IMR-90 (cell line): ENCODE measurements at regions of chr5 and their contacts with region 1.

Region 1: GRCh38 chr5:88729084-88729828 is 153.7 kb downstream of the MEF2C start:
- DNase-seq: peak; percentile 78
- ATAC-seq: peak; percentile 91
- H3K4me3 ChIP-seq: no peak overlapping the region
- H3K27ac ChIP-seq: no peak overlapping the region
- H3K4me1 ChIP-seq: no peaks in the 10 kb centered on the region
- H3K27me3 ChIP-seq: no peaks in the 10 kb centered on the region
- CTCF ChIP-seq: peak; percentile 79
- POLR2A ChIP-seq: no peak
- RAD21 ChIP-seq: peak; percentile 90

Region 2: DNA sequence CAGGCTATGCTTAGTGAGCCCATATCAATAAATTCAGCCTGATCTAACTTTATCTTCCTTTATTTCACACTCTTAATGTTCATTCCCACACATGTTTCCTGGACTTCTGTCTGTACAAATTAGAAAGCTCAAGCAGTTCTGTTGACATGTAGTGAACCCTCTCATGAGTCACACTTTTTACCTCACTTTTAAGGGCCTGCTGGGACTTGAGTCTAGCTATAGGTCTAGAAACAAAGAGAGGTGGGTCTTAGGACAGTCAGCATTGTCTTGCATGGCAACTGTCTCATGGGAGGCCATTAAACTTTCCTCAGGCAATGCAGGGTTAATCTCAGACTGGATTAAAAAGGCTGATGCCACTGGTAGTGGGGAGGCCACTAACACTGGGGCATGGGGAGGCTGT is 1307.9 kb before region 1 on chr5:
- CTCF ChIA-PET with region 1: no interaction called
- POLR2A ChIA-PET with region 1: no interaction called
- dilution Hi-C with region 1: no loop called
- in situ Hi-C with region 1: no loop called
- intact Hi-C with region 1: loop called (anchors 10 kb)
- DNase-seq: no peak
- ATAC-seq: no peak
- H3K4me3 ChIP-seq: no peak overlapping the region
- H3K27ac ChIP-seq: no peak overlapping the region
- H3K4me1 ChIP-seq: no peaks in the 10 kb centered on the region
- H3K27me3 ChIP-seq: no peaks in the 10 kb centered on the region
- CTCF ChIP-seq: no peak
- POLR2A ChIP-seq: no peak
- RAD21 ChIP-seq: no peak

Region 3: GRCh38 chr5:88785391-88786219 is 56.3 kb after region 1 on chr5:
- CTCF ChIA-PET with region 1: no interaction called
- POLR2A ChIA-PET with region 1: no interaction called
- dilution Hi-C with region 1: no loop called
- in situ Hi-C with region 1: no loop called
- intact Hi-C with region 1: loop called (anchors 5 kb)
- DNase-seq: peak; percentile 93
- ATAC-seq: peak; percentile 94
- H3K4me3 ChIP-seq: peak overlapping the region; percentile 7; the same call in 1 of the 2 replicates
- H3K27ac ChIP-seq: no peak overlapping the region
- H3K4me1 ChIP-seq: peaks cover 6% of the 10 kb centered on the region; the same call in 1 of the 2 replicates
- H3K27me3 ChIP-seq: no peaks in the 10 kb centered on the region
- CTCF ChIP-seq: no peak
- POLR2A ChIP-seq: peak; percentile 46; the same call in 1 of the 2 replicates
- RAD21 ChIP-seq: no peak

Region 4: DNA sequence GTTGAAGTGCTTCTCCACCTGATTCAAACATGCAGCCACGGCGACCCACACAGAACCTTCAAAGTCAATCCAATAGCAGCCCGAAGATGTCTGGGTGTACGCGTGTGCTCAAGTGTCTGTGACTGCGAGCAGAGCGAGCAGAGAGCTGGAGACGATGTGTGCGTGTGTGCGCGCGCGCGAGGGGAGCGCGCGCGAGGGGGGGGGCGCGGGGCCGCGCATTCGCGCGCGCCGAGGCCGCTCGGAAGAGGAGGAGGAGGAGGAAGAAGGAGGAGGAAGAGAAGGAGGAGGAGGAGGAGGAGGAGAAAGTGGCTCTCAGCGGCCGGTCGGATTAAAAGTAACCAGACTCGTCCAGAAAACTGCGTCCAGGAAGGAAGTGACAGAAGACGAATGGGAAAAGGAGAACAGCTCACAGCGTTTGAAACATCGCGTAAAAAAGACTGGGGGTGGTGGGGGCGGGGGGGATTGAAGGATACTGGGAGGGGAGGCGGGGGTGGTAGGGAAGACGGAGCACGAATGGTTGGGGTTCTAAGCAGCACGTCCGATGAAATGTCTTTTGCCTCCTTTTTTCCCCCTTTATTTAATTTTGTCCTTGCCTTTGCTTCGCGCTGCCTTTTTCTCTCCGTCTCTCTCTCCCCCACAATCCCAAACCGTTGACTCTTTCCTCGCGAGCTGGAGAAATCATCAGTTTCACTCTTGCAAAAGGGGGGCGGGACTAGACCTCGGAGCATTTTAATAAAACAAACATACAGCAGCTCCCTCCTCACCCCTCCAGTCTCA is 154.0 kb after region 1 on chr5 and contains the start of gene MEF2C:
- CTCF ChIA-PET with region 1: interaction called, 3 read pairs
- POLR2A ChIA-PET with region 1: no interaction called
- dilution Hi-C with region 1: no loop called
- in situ Hi-C with region 1: no loop called
- intact Hi-C with region 1: loop called (anchors 2 kb)
- DNase-seq: peak; percentile 81
- ATAC-seq: peak; percentile 79
- H3K4me3 ChIP-seq: peak within 1 kb of the TSS; percentile 61
- H3K27ac ChIP-seq: peak within 1 kb of the TSS; percentile 79
- H3K4me1 ChIP-seq: 0 out of 2 replicates have a peak, but pooled peaks cover 3% of the 10 kb centered on the region
- H3K27me3 ChIP-seq: no peaks in the 10 kb centered on the region
- CTCF ChIP-seq: no peak
- POLR2A ChIP-seq: peak; percentile 70; the same call in 1 of the 2 replicates
- RAD21 ChIP-seq: peak; percentile 21
- total RNA-seq, gene MEF2C: 6.8 and 9.4 TPM in 2 replicates

Region 5: GRCh38 chr5:88940713-88941112 is 211.5 kb after region 1 on chr5:
- CTCF ChIA-PET with region 1: no interaction called
- POLR2A ChIA-PET with region 1: interaction called, 3 read pairs
- dilution Hi-C with region 1: no loop called
- in situ Hi-C with region 1: no loop called
- intact Hi-C with region 1: loop called (anchors 5 kb)
- DNase-seq: no peak
- ATAC-seq: no peak
- H3K4me3 ChIP-seq: no peak overlapping the region
- H3K27ac ChIP-seq: no peak overlapping the region
- H3K4me1 ChIP-seq: peaks cover 17% of the 10 kb centered on the region
- H3K27me3 ChIP-seq: no peaks in the 10 kb centered on the region
- CTCF ChIP-seq: no peak
- POLR2A ChIP-seq: no peak
- RAD21 ChIP-seq: no peak

Region 6: DNA sequence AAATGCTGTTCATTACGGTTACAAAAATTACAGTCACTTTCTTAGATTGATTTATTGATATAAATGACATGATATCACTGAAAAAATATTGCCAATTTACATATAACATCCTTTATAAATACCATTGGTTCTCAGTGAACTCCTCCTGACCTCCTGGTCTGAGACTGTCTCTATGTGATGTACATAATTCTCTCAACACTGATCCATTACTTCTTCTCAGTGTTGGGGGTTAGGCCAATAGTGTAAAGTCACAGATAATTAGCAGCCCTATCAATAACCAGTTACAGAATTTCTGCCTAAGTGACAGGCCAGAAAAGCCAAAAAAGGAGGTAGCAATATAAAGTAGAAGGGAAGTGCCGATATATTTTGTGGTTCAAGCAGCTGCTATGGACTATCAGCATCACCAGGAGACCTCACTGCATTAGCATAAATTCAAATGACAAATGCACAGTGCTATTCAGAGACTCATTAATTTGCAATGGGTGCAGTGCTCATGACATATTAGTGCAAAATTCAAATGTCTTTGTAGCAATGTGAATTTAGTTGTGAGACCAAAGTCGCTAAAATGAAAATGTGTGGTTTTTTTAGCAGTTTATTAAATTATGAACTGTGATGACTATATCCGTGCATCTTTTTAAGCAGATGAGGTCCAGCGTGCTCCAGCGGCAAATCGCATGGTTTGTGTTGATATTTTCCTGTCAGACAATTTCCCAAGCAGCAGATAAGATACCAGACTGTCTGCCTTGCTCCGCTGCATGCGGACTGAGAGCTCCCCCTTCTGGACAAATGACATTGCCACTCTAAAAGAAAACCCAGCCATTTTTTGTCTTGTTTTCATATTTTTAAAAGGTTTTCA is 1535.7 kb after region 1 on chr5:
- CTCF ChIA-PET with region 1: interaction called, 16 read pairs
- POLR2A ChIA-PET with region 1: no interaction called
- dilution Hi-C with region 1: no loop called
- in situ Hi-C with region 1: loop called (anchors 5 kb)
- intact Hi-C with region 1: loop called (anchors 1 kb)
- DNase-seq: peak; percentile 61
- ATAC-seq: peak; percentile 83
- H3K4me3 ChIP-seq: no peak overlapping the region
- H3K27ac ChIP-seq: no peak overlapping the region
- H3K4me1 ChIP-seq: no peaks in the 10 kb centered on the region
- H3K27me3 ChIP-seq: no peaks in the 10 kb centered on the region
- CTCF ChIP-seq: peak; percentile 98
- POLR2A ChIP-seq: 0 out of 2 replicates have a peak, but pooled peaks have one; percentile 29
- RAD21 ChIP-seq: peak; percentile 90

Region 7: DNA sequence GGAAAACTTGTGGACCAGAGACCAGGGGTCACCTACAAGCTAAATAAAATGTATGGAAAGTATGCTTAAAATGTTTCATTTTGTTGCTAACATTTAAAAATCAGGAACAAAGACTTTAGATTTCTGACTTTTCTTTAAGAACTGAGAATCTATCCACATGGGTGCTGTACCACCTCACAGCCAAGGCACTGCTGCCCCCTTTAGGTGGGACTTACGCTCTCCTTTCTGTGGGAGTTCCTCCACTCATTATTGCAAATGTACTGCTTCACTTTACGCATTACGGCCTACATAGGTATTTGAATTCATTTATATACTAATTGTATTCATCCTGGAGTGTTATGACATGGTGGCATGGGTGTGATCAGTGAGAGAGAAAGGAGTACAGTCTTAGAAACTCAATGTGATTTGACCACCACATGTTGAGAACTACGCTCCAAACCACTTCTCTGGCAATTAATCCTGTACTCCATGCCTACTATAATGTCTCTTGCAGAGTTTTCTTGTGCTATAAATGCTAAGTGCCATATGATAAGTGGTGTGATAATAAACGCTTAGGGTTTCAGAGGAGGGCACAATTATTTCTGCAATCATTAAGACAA is 1705.0 kb after region 1 on chr5:
- CTCF ChIA-PET with region 1: no interaction called
- POLR2A ChIA-PET with region 1: no interaction called
- dilution Hi-C with region 1: no loop called
- in situ Hi-C with region 1: no loop called
- intact Hi-C with region 1: loop called (anchors 5 kb)
- DNase-seq: peak; percentile 45
- ATAC-seq: peak; percentile 85
- H3K4me3 ChIP-seq: no peak overlapping the region
- H3K27ac ChIP-seq: no peak overlapping the region
- H3K4me1 ChIP-seq: no peaks in the 10 kb centered on the region
- H3K27me3 ChIP-seq: peaks cover 1% of the 10 kb centered on the region
- CTCF ChIP-seq: peak; percentile 65
- POLR2A ChIP-seq: no peak
- RAD21 ChIP-seq: peak; percentile 77